MCF 10A (cell line): ENCODE measurements at regions of chr10 and their contacts with region 1.

Region 1: GRCh38 chr10:88880282-88881076 is 434 bp downstream of the STAMBPL1 start:
- DNase-seq: peak; percentile 84
- H3K4me3 Mint-ChIP-seq: peak overlapping the region; percentile 97
- H3K27ac Mint-ChIP-seq: peak overlapping the region; percentile 91
- H3K4me1 Mint-ChIP-seq: peaks cover 29% of the 10 kb centered on the region
- H3K27me3 Mint-ChIP-seq: no peaks in the 10 kb centered on the region
- CTCF ChIP-seq: no peak

Region 2: DNA sequence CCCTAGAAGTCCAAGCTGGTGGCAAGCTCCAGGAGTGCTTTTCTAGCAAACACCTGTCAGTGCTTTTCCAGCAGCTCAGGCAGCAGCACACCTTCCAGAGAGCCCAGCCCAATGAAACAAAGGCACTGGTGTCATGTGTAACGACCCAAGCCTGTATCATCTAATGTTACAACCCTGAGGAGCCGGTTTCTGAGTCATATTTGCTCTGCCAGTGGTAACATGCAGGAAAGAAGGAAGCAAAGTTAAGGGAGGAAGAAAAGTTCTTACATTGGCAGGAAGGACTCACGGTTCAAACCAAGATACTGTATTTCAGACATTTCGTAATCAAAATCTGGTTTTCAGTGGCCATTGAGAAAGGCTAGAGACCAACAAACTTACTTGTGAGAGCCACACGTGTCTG is 28.8 kb before region 1 on chr10 and contains the start of gene ANKRD22:
- CTCF ChIA-PET with region 1: interaction called, 3 read pairs
- POLR2A ChIA-PET with region 1: interaction called, 16 read pairs
- intact Hi-C with region 1: no loop called
- DNase-seq: peak; percentile 95
- H3K4me3 Mint-ChIP-seq: peak within 1 kb of the TSS; percentile 49
- H3K27ac Mint-ChIP-seq: peak within 1 kb of the TSS; percentile 88
- H3K4me1 Mint-ChIP-seq: peaks cover 32% of the 10 kb centered on the region
- H3K27me3 Mint-ChIP-seq: no peaks in the 10 kb centered on the region
- CTCF ChIP-seq: no peak
- total RNA-seq, gene ANKRD22: 0.26 TPM in 1 of 2 replicates, not detected in the other

Region 3: DNA sequence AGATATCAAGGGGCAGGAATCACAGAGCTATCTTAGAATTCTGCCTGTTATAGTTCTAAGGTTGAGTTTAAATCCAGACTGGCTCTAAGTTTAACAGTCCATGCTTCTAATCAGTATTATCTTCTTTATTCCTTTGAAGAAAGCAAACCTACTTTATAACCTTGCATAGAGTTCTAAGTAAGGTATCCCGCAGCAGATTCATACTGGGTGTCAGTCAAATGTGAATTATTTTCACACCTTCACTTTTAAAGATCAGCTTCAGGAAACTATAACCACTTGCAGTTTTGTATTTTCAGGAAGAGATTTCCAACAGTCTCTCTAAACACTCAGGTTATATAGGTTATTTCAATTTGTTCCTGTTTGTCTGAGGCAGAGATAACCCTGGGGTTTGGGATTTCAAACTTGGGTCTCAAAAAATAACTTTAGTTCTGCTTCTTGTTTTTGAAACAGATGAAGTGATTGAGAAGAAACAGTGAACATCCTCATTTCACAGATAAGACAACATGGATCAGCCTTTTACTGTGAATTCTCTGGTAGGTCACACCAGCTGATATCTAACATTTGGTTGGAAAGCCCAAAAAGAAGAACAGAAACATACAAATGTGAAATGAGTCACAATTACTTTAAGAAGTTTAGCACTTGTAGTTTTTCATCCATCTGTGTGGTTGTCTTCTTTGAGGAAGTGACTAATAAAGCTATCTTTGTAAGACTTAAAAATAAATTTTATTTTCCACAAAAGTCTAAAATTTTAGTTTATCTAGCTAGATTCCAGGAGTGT is 20.9 kb after region 1 on chr10:
- CTCF ChIA-PET with region 1: interaction called, 4 read pairs
- POLR2A ChIA-PET with region 1: interaction called, 34 read pairs
- intact Hi-C with region 1: no loop called
- DNase-seq: no peak
- H3K4me3 Mint-ChIP-seq: no peak overlapping the region
- H3K27ac Mint-ChIP-seq: peak overlapping the region; percentile 27
- H3K4me1 Mint-ChIP-seq: peaks cover 11% of the 10 kb centered on the region
- H3K27me3 Mint-ChIP-seq: no peaks in the 10 kb centered on the region
- CTCF ChIP-seq: no peak

Region 4: DNA sequence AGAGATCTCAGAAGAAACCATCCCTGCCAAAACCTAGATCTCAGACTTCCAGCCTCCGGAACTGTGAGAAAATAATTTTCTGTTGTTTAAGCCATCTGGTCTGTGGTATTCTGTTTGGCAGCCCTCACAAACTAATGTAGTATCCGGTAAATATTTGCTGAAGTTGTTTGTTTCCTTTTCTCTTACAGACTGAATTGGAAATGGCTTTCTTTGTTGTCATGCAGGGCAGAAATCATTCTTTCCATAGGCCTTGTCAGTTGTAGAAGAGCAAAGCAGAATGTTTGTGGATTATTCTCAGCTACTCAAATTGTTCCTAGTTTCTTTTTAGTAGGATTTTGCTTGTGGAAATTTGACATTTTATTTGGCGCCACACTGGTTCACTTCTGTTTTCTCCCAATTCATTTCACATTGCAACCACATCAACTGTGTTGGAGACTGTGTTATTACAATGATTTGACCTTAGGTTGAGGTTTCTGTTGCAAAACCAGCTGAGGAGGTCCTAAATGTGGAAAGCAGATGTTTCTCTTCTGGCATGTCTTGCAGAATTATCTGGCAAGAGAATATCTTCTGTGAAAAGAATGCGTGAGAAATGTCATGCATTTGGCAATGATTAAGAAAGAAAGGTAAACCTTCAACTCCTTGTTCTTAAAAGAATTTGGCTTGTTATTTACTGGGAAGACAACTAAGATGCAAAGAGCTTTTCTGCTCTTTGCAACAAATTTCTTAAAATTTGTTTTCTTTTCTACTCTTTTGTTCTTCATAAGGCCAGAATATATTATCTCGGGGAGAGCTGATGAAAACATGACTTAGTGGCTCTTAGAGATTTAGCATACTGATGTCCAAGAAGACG is 46.3 kb after region 1 on chr10:
- CTCF ChIA-PET with region 1: interaction called, 17 read pairs
- POLR2A ChIA-PET with region 1: interaction called, 23 read pairs
- intact Hi-C with region 1: no loop called
- DNase-seq: peak; percentile 76
- H3K4me3 Mint-ChIP-seq: no peak overlapping the region
- H3K27ac Mint-ChIP-seq: peak overlapping the region; percentile 69
- H3K4me1 Mint-ChIP-seq: peaks cover 23% of the 10 kb centered on the region
- H3K27me3 Mint-ChIP-seq: no peaks in the 10 kb centered on the region
- CTCF ChIP-seq: no peak